Left ventricle myocardium inferior (tissue), 1 donor: ENCODE measurements at regions of chr12 and their contacts with region 1.

Region 1: GRCh38 chr12:49188914-49189367 is at the start of gene TUBA1A:
- DNase-seq: peak; percentile 91
- H3K4me3 ChIP-seq: peak within 1 kb of the TSS; percentile 73
- H3K27ac ChIP-seq: peak within 1 kb of the TSS; percentile 96
- H3K4me1 ChIP-seq: peaks cover 44% of the 10 kb centered on the region
- H3K27me3 ChIP-seq: no peaks in the 10 kb centered on the region
- CTCF ChIP-seq: no peak
- total RNA-seq, gene TUBA1A: 102 TPM

Region 2: DNA sequence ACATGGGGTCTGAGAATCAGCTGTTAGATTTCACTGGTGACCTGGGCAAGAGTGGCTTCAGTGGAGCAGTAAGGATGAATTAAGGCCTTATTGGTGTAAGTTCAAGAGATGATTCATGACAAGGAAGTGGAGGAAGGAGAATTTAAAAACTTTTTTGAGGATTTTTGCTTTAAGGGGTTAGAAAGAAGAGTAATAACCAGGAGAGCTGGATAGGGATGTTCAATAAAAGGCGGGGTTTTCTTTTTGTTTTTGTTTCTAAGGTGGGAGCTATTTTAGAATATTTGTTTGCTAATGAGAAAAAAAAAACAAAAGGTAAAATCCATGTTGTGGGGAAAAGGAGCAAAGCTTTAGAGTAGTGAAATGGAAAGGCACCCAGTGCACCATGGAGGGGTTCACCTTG is 42.5 kb before region 1 on chr12:
- intact Hi-C with region 1: no loop called
- DNase-seq: no peak
- H3K4me3 ChIP-seq: no peak overlapping the region
- H3K27ac ChIP-seq: no peak overlapping the region
- H3K4me1 ChIP-seq: no peaks in the 10 kb centered on the region
- H3K27me3 ChIP-seq: no peaks in the 10 kb centered on the region
- CTCF ChIP-seq: no peak

Region 3: DNA sequence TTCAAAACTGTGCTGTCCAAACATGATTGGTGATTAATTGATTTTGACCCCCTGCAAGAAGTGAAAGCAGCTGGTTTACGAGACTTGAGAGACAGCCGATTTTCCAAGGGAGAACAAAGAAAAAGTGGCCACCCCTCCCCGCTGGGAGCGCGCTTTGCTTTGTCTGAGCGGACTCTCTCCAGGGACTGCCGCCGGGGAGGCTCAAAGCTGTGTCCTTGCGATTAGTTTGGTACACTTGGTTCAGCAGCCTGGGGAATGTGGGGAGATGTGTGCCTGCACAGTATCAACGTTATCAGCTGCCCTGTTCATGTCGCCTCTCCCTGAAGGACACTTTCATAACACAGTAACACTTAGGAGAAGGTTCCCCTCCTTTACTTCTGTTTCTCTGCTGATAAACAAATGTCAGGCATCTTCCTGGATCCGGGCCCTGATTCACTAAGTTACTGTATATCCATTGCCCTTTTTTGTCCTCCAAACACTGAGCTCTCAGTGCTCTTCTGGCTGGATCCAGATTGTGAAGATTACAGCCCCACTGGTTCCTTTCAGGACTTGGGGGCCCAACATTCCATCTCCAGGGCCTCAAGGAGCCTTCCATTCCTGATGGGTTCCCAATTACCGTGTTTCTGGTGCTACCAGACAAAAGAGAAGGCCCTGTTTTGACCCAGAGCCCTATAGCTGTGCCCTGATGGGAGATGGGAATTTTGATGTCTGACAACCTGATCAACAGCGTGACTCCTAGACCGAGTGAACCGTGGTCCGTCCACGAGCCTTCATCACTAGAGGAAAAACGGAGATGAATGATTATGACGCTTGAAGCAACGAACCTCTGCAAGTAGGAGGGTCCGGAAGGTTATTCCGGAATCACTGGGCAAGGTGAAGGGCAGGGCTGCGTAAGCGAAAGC is 44.2 kb after region 1 on chr12:
- intact Hi-C with region 1: loop called (anchors 10 kb)
- DNase-seq: peak; percentile 75
- H3K4me3 ChIP-seq: peak overlapping the region; percentile 44
- H3K27ac ChIP-seq: peak overlapping the region; percentile 98
- H3K4me1 ChIP-seq: peaks cover 32% of the 10 kb centered on the region
- H3K27me3 ChIP-seq: no peaks in the 10 kb centered on the region
- CTCF ChIP-seq: peak; percentile 47

Region 4: DNA sequence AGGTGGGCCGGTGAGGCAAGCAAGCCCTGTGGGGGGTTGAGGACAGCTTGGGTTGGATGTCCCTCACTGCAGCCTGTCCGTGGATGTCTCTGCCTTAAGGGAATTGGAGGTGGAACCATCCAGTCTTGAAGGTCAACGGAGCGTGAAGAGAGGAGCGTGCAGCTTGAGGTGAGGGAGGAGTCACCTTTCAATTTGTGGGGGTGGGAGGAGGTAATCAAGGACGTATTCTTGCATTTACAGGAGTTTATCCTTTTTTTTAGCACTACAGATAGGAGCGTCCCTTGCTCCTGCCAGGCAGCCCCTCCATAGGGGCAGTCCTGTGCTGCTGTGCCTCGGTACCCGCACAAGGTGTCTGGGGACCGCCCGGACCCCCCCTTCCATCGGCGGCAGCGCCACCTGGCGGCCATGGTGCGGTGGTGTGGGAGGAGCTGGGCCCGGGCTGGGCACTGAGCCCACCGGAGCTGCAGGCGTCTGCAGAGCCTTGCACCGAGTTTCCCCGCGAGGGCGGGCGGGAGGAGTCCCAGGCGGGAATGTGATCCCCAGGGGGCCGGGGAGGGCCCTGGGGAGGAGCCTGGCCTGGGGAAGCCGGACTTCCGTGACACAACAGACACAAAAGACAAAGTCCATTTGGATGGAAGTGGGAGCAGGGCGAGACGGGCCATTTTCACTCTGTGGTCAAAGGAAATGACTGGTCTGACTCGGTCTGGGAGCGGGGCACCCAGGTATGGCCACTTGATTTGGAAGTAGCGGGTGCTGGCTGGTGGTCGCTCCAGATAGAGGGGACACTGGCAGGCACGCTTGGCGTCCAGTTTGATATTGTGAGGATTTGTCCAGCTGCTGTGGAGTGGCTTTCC is 158.7 kb after region 1 on chr12:
- intact Hi-C with region 1: no loop called
- DNase-seq: peak; percentile 69
- H3K4me3 ChIP-seq: peak overlapping the region; percentile 63
- H3K27ac ChIP-seq: no peak overlapping the region
- H3K4me1 ChIP-seq: peaks cover 52% of the 10 kb centered on the region
- H3K27me3 ChIP-seq: peaks cover 100% of the 10 kb centered on the region
- CTCF ChIP-seq: peak; percentile 98